ENCODE measurements at regions of chr17 and their contacts with region 1.

Region 1: DNA sequence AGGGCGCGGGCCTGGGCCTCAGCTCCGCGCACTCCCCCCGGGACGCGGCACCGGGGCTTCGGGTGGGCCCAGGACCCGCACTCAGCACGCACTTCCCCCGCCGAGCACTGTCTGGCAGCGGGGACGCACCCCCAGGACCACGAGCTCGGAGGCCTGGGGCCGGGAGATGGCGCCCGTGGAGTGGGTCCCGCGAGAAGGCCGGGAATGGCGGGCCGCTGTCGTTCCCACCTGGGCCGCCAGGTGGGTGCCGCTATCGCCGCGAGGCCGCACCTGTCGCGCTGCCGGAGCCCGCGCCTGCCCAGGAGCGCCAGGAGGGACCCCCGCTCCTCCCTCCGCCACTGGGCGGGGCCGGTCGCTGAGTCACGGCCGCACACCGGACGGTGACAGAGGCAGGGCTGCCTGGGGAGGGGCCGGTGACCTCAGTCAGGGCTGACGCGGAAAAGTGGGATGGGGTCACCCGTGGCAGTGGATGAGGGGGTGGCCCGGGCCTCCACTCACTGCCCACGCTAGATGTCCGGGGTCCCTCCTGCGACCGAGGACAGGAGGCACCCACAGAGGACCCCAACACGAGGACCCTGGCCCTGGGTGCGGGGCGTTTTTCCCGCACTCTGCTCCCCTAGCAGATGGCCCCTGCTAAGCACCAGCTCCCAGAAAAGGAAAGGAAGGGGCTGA is 6.8 kb upstream of the ACTG1 start:
- DNase-seq: no peak
- ATAC-seq: peak; percentile 39
- H3K4me3 ChIP-seq: peak overlapping the region; percentile 72
- H3K27ac ChIP-seq: peak overlapping the region; percentile 100
- H3K4me1 ChIP-seq: peaks cover 33% of the 10 kb centered on the region
- H3K27me3 ChIP-seq: no peaks in the 10 kb centered on the region
- CTCF ChIP-seq: peak; percentile 50 to 64 (median 61)
- EP300 ChIP-seq: no peak
- POLR2A ChIP-seq: peak; percentile 68
- RAD21 ChIP-seq: no peak

Region 2: GRCh38 chr17:81553018-81553615 is 33.7 kb after region 1 on chr17:
- CTCF ChIA-PET with region 1: interaction called, 7 read pairs
- POLR2A ChIA-PET with region 1: interaction called, 34 read pairs
- RAD21 ChIA-PET with region 1: interaction called, 17 read pairs
- SMC1A ChIA-PET with region 1: interaction called, 6 read pairs
- in situ Hi-C with region 1: no loop called
- intact Hi-C with region 1: loop called (anchors 2 kb)
- DNase-seq: peak; percentile 53
- ATAC-seq: peak; percentile 86
- H3K4me3 ChIP-seq: peak overlapping the region; percentile 93
- H3K27ac ChIP-seq: peak overlapping the region; percentile 58
- H3K4me1 ChIP-seq: peaks cover 14% of the 10 kb centered on the region
- H3K27me3 ChIP-seq: no peaks in the 10 kb centered on the region
- CTCF ChIP-seq: peak in 2 of 3 experiments; percentile 20 to 40; a peak in 3 of 6 replicates
- EP300 ChIP-seq: no peak
- POLR2A ChIP-seq: 0 out of 2 replicates have a peak, but pooled peaks have one; percentile 36
- RAD21 ChIP-seq: peak; percentile 12; the same call in 1 of the 2 replicates

Region 3: DNA sequence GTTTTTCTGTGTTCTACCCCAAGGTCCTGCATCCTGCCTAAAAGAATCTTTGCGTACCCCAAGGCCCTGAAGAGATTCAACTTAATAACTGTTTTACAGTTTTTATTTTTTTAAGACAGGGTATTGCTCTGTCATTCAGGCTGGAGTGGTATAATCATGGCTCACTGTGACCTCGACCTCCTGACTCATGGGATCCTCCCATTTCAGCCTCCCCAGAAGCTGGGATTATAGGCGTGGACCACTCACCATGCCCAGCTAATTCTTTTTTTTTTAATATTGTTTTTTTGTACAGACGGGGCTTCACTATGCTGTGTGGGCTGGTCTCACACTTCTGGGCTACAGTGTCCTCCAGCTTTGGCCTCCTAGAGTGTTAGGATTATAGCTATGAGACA is 42.1 kb after region 1 on chr17:
- CTCF ChIA-PET with region 1: interaction called, 10 read pairs
- POLR2A ChIA-PET with region 1: no interaction called
- RAD21 ChIA-PET with region 1: interaction called, 3 read pairs
- SMC1A ChIA-PET with region 1: interaction called, 3 read pairs
- in situ Hi-C with region 1: no loop called
- intact Hi-C with region 1: no loop called
- DNase-seq: no peak
- ATAC-seq: peak; percentile 8; the same call in 2 of the 3 replicates
- H3K4me3 ChIP-seq: no peak overlapping the region
- H3K27ac ChIP-seq: peak overlapping the region; percentile 64
- H3K4me1 ChIP-seq: peaks cover 22% of the 10 kb centered on the region
- H3K27me3 ChIP-seq: no peaks in the 10 kb centered on the region
- CTCF ChIP-seq: no peak
- EP300 ChIP-seq: no peak
- POLR2A ChIP-seq: no peak
- RAD21 ChIP-seq: no peak